GM12878 (cell line): ENCODE measurements at regions of chr4 and their contacts with region 1.

Region 1: GRCh38 chr4:56863441-56864139 is 42.1 kb upstream of the SPINK2 start:
- DNase-seq: no peak
- ATAC-seq: peak; percentile 59
- H3K4me3 ChIP-seq: no peak overlapping the region
- H3K27ac ChIP-seq: no peak overlapping the region
- H3K4me1 ChIP-seq: peaks cover 22% of the 10 kb centered on the region
- H3K27me3 ChIP-seq: no peaks in the 10 kb centered on the region
- CTCF ChIP-seq: no peak
- EP300 ChIP-seq: no peak
- POLR2A ChIP-seq: no peak
- RAD21 ChIP-seq: no peak

Region 2: GRCh38 chr4:56907489-56908205 is 44.1 kb after region 1 on chr4 and contains the start of gene REST:
- CTCF ChIA-PET with region 1: no interaction called
- POLR2A ChIA-PET with region 1: interaction called, 3 read pairs
- RAD21 ChIA-PET with region 1: no interaction called
- SMC1A ChIA-PET with region 1: no interaction called
- in situ Hi-C with region 1: no loop called
- intact Hi-C with region 1: loop called (anchors 5 kb)
- DNase-seq: no peak
- ATAC-seq: peak; percentile 67
- H3K4me3 ChIP-seq: peak within 1 kb of the TSS; percentile 91
- H3K27ac ChIP-seq: peak within 1 kb of the TSS; percentile 92
- H3K4me1 ChIP-seq: peaks cover 8% of the 10 kb centered on the region; the same call in 1 of the 2 replicates
- H3K27me3 ChIP-seq: no peaks in the 10 kb centered on the region
- CTCF ChIP-seq: no peak
- EP300 ChIP-seq: no peak
- POLR2A ChIP-seq: peak; percentile 77
- RAD21 ChIP-seq: no peak
- polyA plus RNA-seq, gene REST: 3.7 to 8.5 TPM